ENCODE measurements at regions of chr1 and their contacts with region 1.

Region 1: GRCh38 chr1:92485381-92486257 is 1.1 kb downstream of the GFI1 start:
- DNase-seq: no peak
- ATAC-seq: peak; percentile 63
- H3K4me3 ChIP-seq: peak overlapping the region; percentile 93
- H3K27ac ChIP-seq: peak overlapping the region; percentile 77
- H3K4me1 ChIP-seq: peaks cover 6% of the 10 kb centered on the region
- H3K27me3 ChIP-seq: no peaks in the 10 kb centered on the region
- CTCF ChIP-seq: peak; percentile 55 to 69 (median 56)
- EP300 ChIP-seq: no peak
- POLR2A ChIP-seq: peak; percentile 74
- RAD21 ChIP-seq: peak; percentile 45

Region 2: GRCh38 chr1:92461364-92462097 is 24.1 kb before region 1 on chr1:
- CTCF ChIA-PET with region 1: interaction called, 13 read pairs
- POLR2A ChIA-PET with region 1: interaction called, 11 read pairs
- RAD21 ChIA-PET with region 1: interaction called, 12 read pairs
- SMC1A ChIA-PET with region 1: interaction called, 16 read pairs
- in situ Hi-C with region 1: no loop called
- intact Hi-C with region 1: no loop called
- DNase-seq: no peak
- ATAC-seq: peak; percentile 87
- H3K4me3 ChIP-seq: no peak overlapping the region
- H3K27ac ChIP-seq: no peak overlapping the region
- H3K4me1 ChIP-seq: peaks cover 17% of the 10 kb centered on the region
- H3K27me3 ChIP-seq: no peaks in the 10 kb centered on the region
- CTCF ChIP-seq: peak in 2 of 3 experiments; percentile 23 to 41; a peak in 3 of 6 replicates
- EP300 ChIP-seq: 0 out of 4 replicates have a peak, but pooled peaks of 1 of the 2 experiments have one; percentile 42
- POLR2A ChIP-seq: no peak
- RAD21 ChIP-seq: peak; percentile 67

Region 3: DNA sequence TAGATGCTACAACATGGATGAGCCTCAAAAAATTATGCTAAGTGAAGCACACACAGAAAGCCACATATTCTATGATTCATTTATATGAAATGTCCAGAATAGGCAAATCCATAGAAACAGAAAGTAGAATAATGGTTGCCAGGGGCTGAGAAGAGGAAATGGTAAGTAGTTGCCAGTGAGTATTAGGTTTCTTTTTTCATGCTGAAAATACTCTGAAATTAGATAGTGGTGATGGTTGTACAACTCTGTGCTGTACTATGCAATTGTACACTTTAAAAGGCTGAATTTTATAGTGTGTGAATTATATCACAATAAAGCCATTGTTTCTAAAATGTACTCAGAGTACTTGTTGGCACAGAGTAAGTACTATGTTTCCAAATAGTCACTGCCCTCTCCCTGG is 16.6 kb after region 1 on chr1:
- CTCF ChIA-PET with region 1: interaction called, 8 read pairs
- POLR2A ChIA-PET with region 1: interaction called, 18 read pairs
- RAD21 ChIA-PET with region 1: interaction called, 10 read pairs
- SMC1A ChIA-PET with region 1: interaction called, 11 read pairs
- in situ Hi-C with region 1: no loop called
- intact Hi-C with region 1: loop called (anchors 2 kb)
- DNase-seq: no peak
- ATAC-seq: peak; percentile 82
- H3K4me3 ChIP-seq: no peak overlapping the region
- H3K27ac ChIP-seq: no peak overlapping the region
- H3K4me1 ChIP-seq: peaks cover 31% of the 10 kb centered on the region
- H3K27me3 ChIP-seq: no peaks in the 10 kb centered on the region
- CTCF ChIP-seq: no peak
- EP300 ChIP-seq: no peak
- POLR2A ChIP-seq: no peak
- RAD21 ChIP-seq: no peak

Region 4: GRCh38 chr1:92563457-92564216 is 78.0 kb after region 1 on chr1:
- CTCF ChIA-PET with region 1: interaction called, 7 read pairs
- POLR2A ChIA-PET with region 1: interaction called, 13 read pairs
- RAD21 ChIA-PET with region 1: interaction called, 9 read pairs
- SMC1A ChIA-PET with region 1: interaction called, 11 read pairs
- in situ Hi-C with region 1: no loop called
- intact Hi-C with region 1: no loop called
- DNase-seq: peak; percentile 45
- ATAC-seq: peak; percentile 100
- H3K4me3 ChIP-seq: no peak overlapping the region
- H3K27ac ChIP-seq: peak overlapping the region; percentile 11; the same call in 1 of the 2 replicates
- H3K4me1 ChIP-seq: peaks cover 10% of the 10 kb centered on the region; the same call in 1 of the 2 replicates
- H3K27me3 ChIP-seq: no peaks in the 10 kb centered on the region
- CTCF ChIP-seq: no peak
- EP300 ChIP-seq: peak; percentile 69 to 94; a peak in 3 of 4 replicates
- POLR2A ChIP-seq: no peak
- RAD21 ChIP-seq: no peak

Region 5: DNA sequence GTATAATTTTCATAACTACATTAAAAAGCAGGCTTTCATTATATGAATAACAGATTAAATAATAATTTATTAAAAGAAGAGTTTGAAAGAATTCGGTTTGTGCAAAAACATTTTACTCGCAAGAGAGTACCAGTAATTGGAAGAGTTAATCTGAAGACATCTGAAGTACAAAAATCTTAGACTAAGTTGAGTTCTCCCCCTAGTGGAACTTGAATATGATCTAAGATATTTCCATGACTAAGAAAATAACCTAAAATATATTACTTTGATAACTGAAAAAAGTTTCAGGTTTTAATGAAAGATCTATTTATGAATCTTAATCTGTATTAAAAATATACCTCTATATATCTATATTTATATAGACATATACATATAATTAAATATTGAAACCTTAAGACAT is 113.6 kb after region 1 on chr1:
- CTCF ChIA-PET with region 1: interaction called, 18 read pairs
- POLR2A ChIA-PET with region 1: interaction called, 15 read pairs
- RAD21 ChIA-PET with region 1: interaction called, 36 read pairs
- SMC1A ChIA-PET with region 1: interaction called, 22 read pairs
- in situ Hi-C with region 1: no loop called
- intact Hi-C with region 1: loop called (anchors 5 kb)
- DNase-seq: no peak
- ATAC-seq: peak; percentile 76
- H3K4me3 ChIP-seq: no peak overlapping the region
- H3K27ac ChIP-seq: no peak overlapping the region
- H3K4me1 ChIP-seq: no peaks in the 10 kb centered on the region
- H3K27me3 ChIP-seq: no peaks in the 10 kb centered on the region
- CTCF ChIP-seq: peak; percentile 21 to 55 (median 25); a peak in 3 of 6 replicates
- EP300 ChIP-seq: no peak
- POLR2A ChIP-seq: no peak
- RAD21 ChIP-seq: peak; percentile 82

Region 6: GRCh38 chr1:92907949-92908684 is 422.5 kb after region 1 on chr1:
- CTCF ChIA-PET with region 1: no interaction called
- POLR2A ChIA-PET with region 1: no interaction called
- RAD21 ChIA-PET with region 1: no interaction called
- SMC1A ChIA-PET with region 1: no interaction called
- in situ Hi-C with region 1: no loop called
- intact Hi-C with region 1: no loop called
- DNase-seq: no peak
- ATAC-seq: no peak
- H3K4me3 ChIP-seq: no peak overlapping the region
- H3K27ac ChIP-seq: no peak overlapping the region
- H3K4me1 ChIP-seq: peaks cover 7% of the 10 kb centered on the region
- H3K27me3 ChIP-seq: no peaks in the 10 kb centered on the region
- CTCF ChIP-seq: no peak
- EP300 ChIP-seq: no peak
- POLR2A ChIP-seq: no peak
- RAD21 ChIP-seq: no peak

Measured in GM12878 (cell line).